ENCODE measurements at regions of chr2 and their contacts with region 1.

Region 1: DNA sequence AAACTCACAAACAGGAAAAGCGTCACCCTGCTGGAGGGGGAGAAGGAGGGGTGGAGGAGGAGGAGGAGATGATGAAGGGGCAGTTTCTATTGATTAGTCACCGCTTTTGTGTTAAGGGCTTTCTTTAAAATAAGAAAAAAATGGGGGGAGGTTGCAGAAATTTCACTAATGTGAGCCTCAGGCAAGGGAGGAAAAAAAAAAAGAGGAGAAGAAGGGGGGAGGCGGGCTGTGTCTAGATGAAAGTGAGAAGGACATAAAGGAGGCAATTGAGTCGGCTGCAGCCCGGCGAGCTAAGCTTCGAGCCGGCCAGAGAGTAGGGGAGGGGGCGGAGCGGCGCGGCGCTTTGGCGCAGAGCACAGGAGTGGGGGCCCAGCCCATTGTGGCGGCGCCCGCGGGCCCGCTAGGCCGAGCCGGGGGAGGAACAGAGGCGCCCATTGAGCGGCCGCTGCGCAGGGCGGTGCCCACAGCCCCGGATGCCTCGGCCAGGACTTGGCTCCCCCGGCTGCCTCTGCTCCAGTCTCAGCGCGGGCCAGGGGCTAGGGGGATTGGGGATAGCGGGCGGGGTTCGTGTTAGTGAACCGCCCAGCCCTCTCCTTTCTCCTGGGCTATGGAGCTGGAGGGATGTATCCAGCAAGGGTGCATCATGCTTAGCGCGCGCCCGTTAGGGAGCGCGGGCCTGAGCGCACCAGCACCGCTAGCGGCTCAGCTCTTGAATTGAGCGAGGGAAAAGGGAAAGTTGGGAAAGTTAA is 7.9 kb downstream of the PAX3 start:
- DNase-seq: no peak
- H3K4me3 ChIP-seq: no peak overlapping the region
- H3K27ac ChIP-seq: no peak overlapping the region
- H3K4me1 ChIP-seq: peaks cover 4% of the 10 kb centered on the region
- H3K27me3 ChIP-seq: peaks cover 81 to 98% of the 10 kb centered on the region in 2 experiments
- CTCF ChIP-seq: no peak
- POLR2A ChIP-seq: no peak

Region 2: DNA sequence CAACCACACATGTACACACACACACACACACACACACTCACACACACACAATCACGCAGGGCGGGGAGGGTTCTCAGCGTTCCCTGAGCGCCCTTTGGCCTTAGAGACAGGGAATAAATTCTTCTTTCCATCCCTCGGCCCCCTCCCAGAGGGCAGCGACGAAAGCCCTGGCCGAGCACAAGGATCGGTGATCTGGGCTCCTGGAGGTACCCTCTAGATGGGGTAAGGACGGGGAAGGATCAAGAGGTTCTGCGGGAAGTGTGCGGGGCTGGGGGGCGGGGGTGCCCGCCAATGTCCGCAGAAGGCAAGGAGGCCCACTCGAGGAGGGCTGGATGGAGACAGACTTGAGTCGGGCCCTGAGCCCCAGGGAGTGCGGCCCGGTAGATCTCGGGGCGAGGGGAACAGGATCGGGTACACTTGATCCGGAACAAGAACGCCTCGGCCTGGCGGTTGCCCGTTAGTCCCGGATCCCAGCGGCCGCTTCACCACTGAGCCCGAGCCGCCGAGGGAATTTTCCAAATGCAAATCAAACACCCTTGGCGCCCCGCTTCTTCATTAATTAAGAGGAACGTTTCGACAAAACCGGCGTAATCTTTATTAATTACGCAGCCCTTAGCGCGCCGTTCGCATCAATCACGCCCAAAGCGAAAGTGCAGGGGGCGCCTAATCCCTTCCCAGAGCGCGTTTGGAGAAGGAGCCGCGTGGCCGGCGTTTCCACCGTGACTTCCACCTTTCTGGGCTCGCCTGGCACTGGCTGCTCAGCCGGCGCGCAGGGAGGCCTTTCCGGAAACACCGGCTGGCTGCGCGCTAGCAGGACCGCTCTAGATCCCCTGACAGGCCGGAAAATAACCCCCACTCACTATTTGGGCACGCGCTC is 14.8 kb after region 1 on chr2:
- CTCF ChIA-PET with region 1: no interaction called
- POLR2A ChIA-PET with region 1: no interaction called
- dilution Hi-C with region 1: no loop called
- intact Hi-C with region 1: loop called (anchors 2 kb)
- DNase-seq: no peak
- H3K4me3 ChIP-seq: peak overlapping the region in 2 of 3 experiments; percentile 33 to 38
- H3K27ac ChIP-seq: no peak overlapping the region
- H3K4me1 ChIP-seq: peaks cover 9% of the 10 kb centered on the region
- H3K27me3 ChIP-seq: peaks cover 97 to 100% of the 10 kb centered on the region in 2 experiments
- CTCF ChIP-seq: no peak
- POLR2A ChIP-seq: no peak

Measured in endothelial cell of umbilical vein (primary cell).